ENCODE measurements at regions of chr12 and their contacts with region 1.

Region 1: DNA sequence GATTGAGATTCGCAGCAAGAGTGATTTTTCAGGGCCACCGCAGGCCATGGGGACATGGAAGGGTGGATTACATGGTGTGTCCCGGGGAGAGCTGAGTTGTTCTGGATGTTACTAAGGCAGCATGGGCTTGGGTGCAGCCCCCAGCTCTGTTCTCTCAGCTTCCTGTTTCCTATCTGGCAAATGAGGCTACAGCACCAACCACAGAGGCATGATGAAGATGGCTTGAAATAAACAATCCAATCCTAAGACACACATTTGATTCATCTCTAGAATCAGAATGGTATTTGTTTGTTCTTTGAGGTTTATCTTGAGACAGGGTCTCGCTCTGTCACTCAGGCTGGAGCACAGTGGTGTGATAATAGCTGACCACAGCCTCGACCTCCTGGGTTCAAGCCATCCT is 21.6 kb downstream of the GLTP start:
- DNase-seq: no peak
- ATAC-seq: no peak
- H3K4me3 ChIP-seq: no peak overlapping the region
- H3K4me3 Mint-ChIP-seq: no peak overlapping the region
- H3K27ac ChIP-seq: peak overlapping the region; percentile 35
- H3K27ac Mint-ChIP-seq: peak overlapping the region in 3 of 9 donors; percentile 47 to 81 (median 80)
- H3K4me1 ChIP-seq: peaks cover 0 to 8% of the 10 kb centered on the region in 2 donors
- H3K4me1 Mint-ChIP-seq: peaks cover 0 to 8% (median 6%) of the 10 kb centered on the region in 7 donors
- H3K27me3 ChIP-seq: no peaks in the 10 kb centered on the region
- H3K27me3 Mint-ChIP-seq: no peaks in the 10 kb centered on the region

Region 2: DNA sequence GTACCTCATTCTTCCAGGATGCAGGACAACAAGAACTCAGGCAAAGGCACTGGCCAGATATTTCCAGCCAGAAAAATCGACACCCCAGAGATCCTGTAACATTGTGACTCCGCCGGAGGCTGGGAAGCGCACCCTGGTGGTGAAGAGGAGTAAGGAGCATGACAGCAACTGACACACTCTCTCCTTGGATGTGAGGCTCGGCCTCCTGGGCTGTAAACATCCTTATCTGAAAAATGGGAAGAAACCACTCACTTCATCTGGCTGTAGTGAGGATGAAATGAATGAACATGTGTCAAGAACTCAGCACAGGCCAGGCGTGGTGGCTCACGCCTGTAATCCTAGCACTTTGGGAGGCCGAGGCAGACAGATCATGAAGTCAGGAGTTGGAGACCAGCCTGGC is 68.9 kb after region 1 on chr12:
- CTCF ChIA-PET with region 1: interaction called, 11 read pairs
- POLR2A ChIA-PET with region 1: no interaction called
- intact Hi-C with region 1: loop called in 1 of 2 experiments (anchors 1 kb)
- DNase-seq: peak in 8 of 9 donors; percentile 19 to 46 (median 28)
- ATAC-seq: peak; percentile 75
- H3K4me3 ChIP-seq: no peak overlapping the region
- H3K4me3 Mint-ChIP-seq: no peak overlapping the region
- H3K27ac ChIP-seq: no peak overlapping the region
- H3K27ac Mint-ChIP-seq: peak overlapping the region in 8 of 9 donors; percentile 4 to 83 (median 41)
- H3K4me1 ChIP-seq: no peaks in the 10 kb centered on the region
- H3K4me1 Mint-ChIP-seq: peaks cover 0 to 3% (median 0%) of the 10 kb centered on the region in 7 donors
- H3K27me3 ChIP-seq: no peaks in the 10 kb centered on the region
- H3K27me3 Mint-ChIP-seq: no peaks in the 10 kb centered on the region

Region 3: GRCh38 chr12:109944561-109945359 is 86.0 kb after region 1 on chr12:
- CTCF ChIA-PET with region 1: no interaction called
- POLR2A ChIA-PET with region 1: no interaction called
- intact Hi-C with region 1: no loop called
- DNase-seq: no peak
- ATAC-seq: peak; percentile 72
- H3K4me3 ChIP-seq: no peak overlapping the region
- H3K4me3 Mint-ChIP-seq: no peak overlapping the region
- H3K27ac ChIP-seq: no peak overlapping the region
- H3K27ac Mint-ChIP-seq: peak overlapping the region in 3 of 9 donors; percentile 23 to 65 (median 25)
- H3K4me1 ChIP-seq: peaks cover 0 to 17% of the 10 kb centered on the region in 2 donors
- H3K4me1 Mint-ChIP-seq: peaks cover 23 to 32% (median 29%) of the 10 kb centered on the region in 7 donors
- H3K27me3 ChIP-seq: no peaks in the 10 kb centered on the region
- H3K27me3 Mint-ChIP-seq: no peaks in the 10 kb centered on the region

Region 4: GRCh38 chr12:110245369-110245772 is 386.6 kb after region 1 on chr12:
- CTCF ChIA-PET with region 1: no interaction called
- POLR2A ChIA-PET with region 1: no interaction called
- intact Hi-C with region 1: no loop called
- DNase-seq: peak in 7 of 9 donors; percentile 7 to 46 (median 30)
- ATAC-seq: peak; percentile 85
- H3K4me3 ChIP-seq: no peak overlapping the region
- H3K4me3 Mint-ChIP-seq: no peak overlapping the region
- H3K27ac ChIP-seq: no peak overlapping the region
- H3K27ac Mint-ChIP-seq: no peak overlapping the region
- H3K4me1 ChIP-seq: no peaks in the 10 kb centered on the region
- H3K4me1 Mint-ChIP-seq: peaks cover 0 to 5% (median 0%) of the 10 kb centered on the region in 7 donors
- H3K27me3 ChIP-seq: no peaks in the 10 kb centered on the region
- H3K27me3 Mint-ChIP-seq: peaks cover 0 to 5% (median 5%) of the 10 kb centered on the region in 5 donors